Activated CD4-positive, alpha-beta T cell treated with anti-CD3 and anti-CD28 coated beads, Interleukin-2, amount 10 ng/mL, durations not matched to agents 7 days and 5 days (primary cell): ENCODE measurements at regions of chr9 and their contacts with region 1.

Region 1: GRCh38 chr9:133992780-133993634 is 883 bp upstream of the VAV2 start:
- DNase-seq: peak; percentile 70
- H3K4me3 Mint-ChIP-seq: peak overlapping the region; percentile 65
- H3K27ac Mint-ChIP-seq: peak overlapping the region; percentile 71
- H3K4me1 Mint-ChIP-seq: peaks cover 2% of the 10 kb centered on the region
- H3K27me3 Mint-ChIP-seq: peaks cover 17% of the 10 kb centered on the region

Region 2: GRCh38 chr9:133782157-133783130 is 210.6 kb before region 1 on chr9:
- CTCF ChIA-PET with region 1: interaction called, 30 read pairs
- POLR2A ChIA-PET with region 1: no interaction called
- DNase-seq: peak; percentile 80
- H3K4me3 Mint-ChIP-seq: no peak overlapping the region
- H3K27ac Mint-ChIP-seq: no peak overlapping the region
- H3K4me1 Mint-ChIP-seq: peaks cover 16% of the 10 kb centered on the region
- H3K27me3 Mint-ChIP-seq: no peaks in the 10 kb centered on the region

Region 3: GRCh38 chr9:133955821-133956411 is 37.1 kb before region 1 on chr9:
- CTCF ChIA-PET with region 1: no interaction called
- POLR2A ChIA-PET with region 1: no interaction called
- DNase-seq: peak; percentile 23
- H3K4me3 Mint-ChIP-seq: no peak overlapping the region
- H3K27ac Mint-ChIP-seq: peak overlapping the region; percentile 82
- H3K4me1 Mint-ChIP-seq: peaks cover 18% of the 10 kb centered on the region
- H3K27me3 Mint-ChIP-seq: no peaks in the 10 kb centered on the region

Region 4: DNA sequence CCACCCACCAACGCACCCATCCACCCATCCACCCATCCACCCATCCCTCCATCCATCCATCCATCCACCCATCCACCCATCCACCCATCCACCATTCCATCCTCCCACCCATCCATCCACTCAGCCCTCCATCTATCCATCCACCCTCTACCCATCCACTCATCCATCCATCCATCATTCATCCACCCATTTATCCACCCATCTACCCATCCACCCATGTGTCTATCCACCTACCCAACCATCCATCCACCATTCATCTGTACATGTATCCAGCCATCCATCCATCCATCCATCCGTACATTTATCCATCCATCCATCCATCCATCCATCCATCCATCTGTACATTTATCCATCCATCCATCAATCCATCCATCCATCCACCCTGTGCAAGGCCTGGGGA is 10.2 kb after region 1 on chr9:
- CTCF ChIA-PET with region 1: no interaction called
- POLR2A ChIA-PET with region 1: no interaction called
- DNase-seq: no peak
- H3K4me3 Mint-ChIP-seq: no peak overlapping the region
- H3K27ac Mint-ChIP-seq: no peak overlapping the region
- H3K4me1 Mint-ChIP-seq: no peaks in the 10 kb centered on the region
- H3K27me3 Mint-ChIP-seq: no peaks in the 10 kb centered on the region